ENCODE measurements at regions of chr5 and their contacts with region 1.

Region 1: GRCh38 chr5:172714491-172715421 is 56.2 kb downstream of the DUSP1 start:
- DNase-seq: peak; percentile 82
- ATAC-seq: peak; percentile 84
- H3K4me3 Mint-ChIP-seq: no peak overlapping the region
- H3K27ac Mint-ChIP-seq: no peak overlapping the region
- H3K4me1 Mint-ChIP-seq: peaks cover 6% of the 10 kb centered on the region
- H3K27me3 Mint-ChIP-seq: peaks cover 5% of the 10 kb centered on the region

Region 2: DNA sequence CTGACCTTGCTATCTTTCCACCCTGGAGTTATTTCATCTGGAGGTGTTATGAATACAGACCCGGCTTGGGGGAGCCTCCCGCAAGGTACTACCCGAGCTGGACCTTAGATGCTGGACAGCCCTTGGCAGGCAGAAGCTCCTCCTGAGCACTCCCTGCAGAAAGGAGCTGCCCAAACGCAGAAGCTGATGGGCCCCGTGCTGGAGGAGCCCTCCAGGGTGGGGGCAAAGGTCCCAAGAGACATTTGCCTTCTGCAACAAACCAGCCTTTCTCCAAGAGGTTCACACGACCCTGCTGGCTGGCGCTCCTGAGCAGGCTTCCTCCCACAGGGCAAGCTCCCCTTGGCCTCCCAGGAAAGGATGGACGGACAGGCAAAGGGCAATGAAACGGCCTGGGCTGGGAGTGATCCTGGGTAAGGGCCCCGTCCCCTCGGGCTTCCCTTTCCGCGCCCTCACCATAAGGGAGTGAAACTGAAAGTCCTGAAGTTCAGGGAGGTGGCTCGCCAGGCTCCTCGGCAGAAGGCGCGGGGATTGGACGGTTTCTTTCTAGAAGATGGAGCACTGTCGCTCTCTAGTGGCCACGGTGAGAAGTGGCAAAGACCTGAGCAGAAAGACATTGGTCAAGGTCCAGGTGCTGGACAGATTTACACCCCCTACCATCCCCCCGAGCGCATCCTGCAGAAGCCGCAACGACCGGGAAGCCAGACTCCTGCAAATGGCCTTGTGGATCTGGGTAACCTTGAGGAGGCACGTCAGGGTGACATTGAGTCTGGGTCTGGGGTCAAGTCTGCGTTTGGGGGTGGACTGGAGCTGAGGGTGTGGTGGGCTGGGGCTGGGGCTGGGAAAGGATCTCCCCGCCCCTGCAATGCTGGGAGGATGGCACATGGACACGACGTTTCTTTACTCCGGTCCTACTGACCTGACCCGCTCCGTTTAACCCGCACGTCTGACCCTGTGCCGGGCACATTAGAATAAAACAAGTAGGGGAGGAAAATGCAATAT is 17.3 kb before region 1 on chr5:
- CTCF ChIA-PET with region 1: interaction called, 11 read pairs
- POLR2A ChIA-PET with region 1: no interaction called
- intact Hi-C with region 1: no loop called
- DNase-seq: peak; percentile 91
- ATAC-seq: peak; percentile 95
- H3K4me3 Mint-ChIP-seq: peak overlapping the region; percentile 68
- H3K27ac Mint-ChIP-seq: peak overlapping the region; percentile 75
- H3K4me1 Mint-ChIP-seq: peaks cover 11% of the 10 kb centered on the region
- H3K27me3 Mint-ChIP-seq: peaks cover 13% of the 10 kb centered on the region

Region 3: GRCh38 chr5:172833686-172834414 is 119.1 kb after region 1 on chr5 and contains the start of gene ERGIC1:
- CTCF ChIA-PET with region 1: interaction called, 5 read pairs
- POLR2A ChIA-PET with region 1: no interaction called
- intact Hi-C with region 1: loop called in 1 of 2 experiments (anchors 5 kb)
- DNase-seq: peak; percentile 79
- ATAC-seq: peak; percentile 77
- H3K4me3 Mint-ChIP-seq: peak within 1 kb of the TSS; percentile 79
- H3K27ac Mint-ChIP-seq: peak within 1 kb of the TSS; percentile 84
- H3K4me1 Mint-ChIP-seq: peaks cover 42% of the 10 kb centered on the region
- H3K27me3 Mint-ChIP-seq: no peaks in the 10 kb centered on the region
- total RNA-seq, gene ERGIC1: 40.3 to 50.0 TPM

Region 4: DNA sequence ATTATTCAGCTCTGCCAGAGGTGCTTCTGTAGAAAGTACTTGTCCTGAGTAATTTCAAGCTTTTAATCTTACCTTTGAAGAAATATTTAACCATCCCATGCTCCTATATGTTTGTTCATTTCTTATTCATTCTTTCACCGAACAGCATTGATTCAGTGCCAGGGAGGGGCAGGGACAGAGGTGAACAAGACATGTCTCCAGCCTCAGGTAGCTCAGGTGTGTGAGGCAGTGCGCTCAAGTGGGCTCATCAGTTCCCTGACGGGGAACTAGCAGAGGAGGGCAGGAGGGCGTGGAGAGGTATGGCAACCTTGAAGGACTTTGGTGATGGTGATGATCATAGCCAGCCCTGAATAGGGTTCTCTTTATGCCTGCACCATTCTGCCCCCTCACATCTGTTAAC is 145.2 kb after region 1 on chr5:
- CTCF ChIA-PET with region 1: no interaction called
- POLR2A ChIA-PET with region 1: no interaction called
- intact Hi-C with region 1: no loop called
- DNase-seq: no peak
- ATAC-seq: no peak
- H3K4me3 Mint-ChIP-seq: no peak overlapping the region
- H3K27ac Mint-ChIP-seq: no peak overlapping the region
- H3K4me1 Mint-ChIP-seq: peaks cover 16% of the 10 kb centered on the region
- H3K27me3 Mint-ChIP-seq: no peaks in the 10 kb centered on the region

Region 5: GRCh38 chr5:172910828-172911627 is 196.3 kb after region 1 on chr5:
- CTCF ChIA-PET with region 1: interaction called, 11 read pairs
- POLR2A ChIA-PET with region 1: no interaction called
- intact Hi-C with region 1: loop called (anchors 1 to 5 kb)
- DNase-seq: peak; percentile 58
- ATAC-seq: peak; percentile 65
- H3K4me3 Mint-ChIP-seq: no peak overlapping the region
- H3K27ac Mint-ChIP-seq: no peak overlapping the region
- H3K4me1 Mint-ChIP-seq: peaks cover 2% of the 10 kb centered on the region
- H3K27me3 Mint-ChIP-seq: no peaks in the 10 kb centered on the region

Region 6: GRCh38 chr5:172958331-172959046 is 243.7 kb after region 1 on chr5:
- CTCF ChIA-PET with region 1: interaction called, 5 read pairs
- POLR2A ChIA-PET with region 1: interaction called, 11 read pairs
- intact Hi-C with region 1: loop called in 1 of 2 experiments (anchors 2 kb)
- DNase-seq: peak; percentile 83
- ATAC-seq: peak; percentile 76
- H3K4me3 Mint-ChIP-seq: peak overlapping the region; percentile 93
- H3K27ac Mint-ChIP-seq: peak overlapping the region; percentile 94
- H3K4me1 Mint-ChIP-seq: peaks cover 17% of the 10 kb centered on the region
- H3K27me3 Mint-ChIP-seq: no peaks in the 10 kb centered on the region

Region 7: GRCh38 chr5:173204185-173204979 is 489.6 kb after region 1 on chr5:
- CTCF ChIA-PET with region 1: no interaction called
- POLR2A ChIA-PET with region 1: no interaction called
- intact Hi-C with region 1: loop called in 1 of 2 experiments (anchors 1 kb)
- DNase-seq: peak; percentile 36
- ATAC-seq: no peak
- H3K4me3 Mint-ChIP-seq: no peak overlapping the region
- H3K27ac Mint-ChIP-seq: no peak overlapping the region
- H3K4me1 Mint-ChIP-seq: no peaks in the 10 kb centered on the region
- H3K27me3 Mint-ChIP-seq: peaks cover 35% of the 10 kb centered on the region

Measured in activated CD4-positive, alpha-beta T cell treated with anti-CD3 and anti-CD28 coated beads for 36 hours (primary cell).